CD14-positive monocyte (primary cell): ENCODE measurements at regions of chr2 and their contacts with region 1.

Region 1: DNA sequence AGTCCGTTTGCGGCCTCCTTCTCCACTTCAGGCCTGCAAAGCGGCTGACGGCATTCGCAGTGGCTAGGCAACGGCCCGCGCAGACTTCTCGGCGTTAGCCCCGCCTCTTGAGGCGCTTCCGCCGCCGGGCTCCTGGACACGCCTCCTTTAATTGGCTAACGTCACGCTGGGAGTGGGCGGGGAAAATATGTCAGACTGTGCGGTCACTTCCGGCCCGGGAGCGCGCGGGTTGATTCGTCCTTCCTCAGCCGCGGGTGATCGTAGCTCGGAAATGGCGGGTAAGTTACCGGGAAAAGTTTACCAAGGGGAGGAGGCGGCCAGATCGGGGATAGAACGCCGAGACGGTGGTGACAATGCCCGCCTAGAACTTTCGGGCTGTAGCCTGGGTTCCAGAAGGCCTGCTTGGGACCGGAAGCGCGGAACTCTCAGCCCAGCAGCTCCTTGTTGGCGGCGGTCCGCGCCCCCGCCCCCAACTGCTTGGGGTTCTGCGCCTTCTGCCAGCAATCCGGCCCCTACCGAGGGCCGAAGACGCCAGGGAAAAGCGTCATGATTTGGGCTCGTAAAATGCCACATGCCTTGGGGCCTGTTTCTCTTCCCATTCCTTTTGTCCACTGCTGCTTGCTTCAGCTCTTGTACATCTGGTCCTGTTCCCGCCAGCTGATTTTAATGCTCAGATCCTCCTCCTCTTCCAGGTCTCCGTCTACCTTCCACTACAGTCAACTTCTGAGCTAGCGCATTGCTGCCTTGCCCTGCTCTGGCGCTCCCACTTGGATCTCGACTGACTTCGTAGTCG is at the start of gene HAT1:
- DNase-seq: peak; percentile 96 to 97 (median 97)
- H3K4me3 ChIP-seq: peak within 1 kb of the TSS; percentile 73 to 88 (median 87)
- H3K4me3 Mint-ChIP-seq: peak within 1 kb of the TSS; percentile 93 to 98
- H3K27ac ChIP-seq: peak within 1 kb of the TSS; percentile 80 to 86
- H3K27ac Mint-ChIP-seq: peak within 1 kb of the TSS; percentile 92 to 99 (median 98)
- H3K4me1 ChIP-seq: peaks cover 18 to 33% of the 10 kb centered on the region in 2 donors
- H3K4me1 Mint-ChIP-seq: peaks cover 22% of the 10 kb centered on the region
- H3K27me3 ChIP-seq: no peaks in the 10 kb centered on the region
- H3K27me3 Mint-ChIP-seq: peaks cover 0 to 1% (median 0%) of the 10 kb centered on the region in 3 donors
- CTCF ChIP-seq: no peak
- polyA plus RNA-seq, gene HAT1: 16.9 to 63.3 (median 62.8) TPM

Region 2: GRCh38 chr2:171687287-171688128 is 234.9 kb before region 1 on chr2 and contains the start of gene DYNC1I2:
- intact Hi-C with region 1: loop called in 1 of 2 experiments (anchors 10 kb)
- DNase-seq: peak; percentile 68 to 85 (median 81)
- H3K4me3 ChIP-seq: peak within 1 kb of the TSS; percentile 63 to 88 (median 82)
- H3K4me3 Mint-ChIP-seq: peak within 1 kb of the TSS; percentile 91 to 97
- H3K27ac ChIP-seq: peak within 1 kb of the TSS; percentile 48 to 84
- H3K27ac Mint-ChIP-seq: peak within 1 kb of the TSS; percentile 86 to 96 (median 95)
- H3K4me1 ChIP-seq: peaks cover 10 to 16% of the 10 kb centered on the region in 2 donors
- H3K4me1 Mint-ChIP-seq: peaks cover 20% of the 10 kb centered on the region
- H3K27me3 ChIP-seq: peaks cover under 1 to 8% of the 10 kb centered on the region in 2 donors
- H3K27me3 Mint-ChIP-seq: peaks cover 2 to 9% (median 6%) of the 10 kb centered on the region in 3 donors
- CTCF ChIP-seq: no peak
- polyA plus RNA-seq, gene DYNC1I2: 30.8 to 39.1 (median 32.2) TPM

Region 3: DNA sequence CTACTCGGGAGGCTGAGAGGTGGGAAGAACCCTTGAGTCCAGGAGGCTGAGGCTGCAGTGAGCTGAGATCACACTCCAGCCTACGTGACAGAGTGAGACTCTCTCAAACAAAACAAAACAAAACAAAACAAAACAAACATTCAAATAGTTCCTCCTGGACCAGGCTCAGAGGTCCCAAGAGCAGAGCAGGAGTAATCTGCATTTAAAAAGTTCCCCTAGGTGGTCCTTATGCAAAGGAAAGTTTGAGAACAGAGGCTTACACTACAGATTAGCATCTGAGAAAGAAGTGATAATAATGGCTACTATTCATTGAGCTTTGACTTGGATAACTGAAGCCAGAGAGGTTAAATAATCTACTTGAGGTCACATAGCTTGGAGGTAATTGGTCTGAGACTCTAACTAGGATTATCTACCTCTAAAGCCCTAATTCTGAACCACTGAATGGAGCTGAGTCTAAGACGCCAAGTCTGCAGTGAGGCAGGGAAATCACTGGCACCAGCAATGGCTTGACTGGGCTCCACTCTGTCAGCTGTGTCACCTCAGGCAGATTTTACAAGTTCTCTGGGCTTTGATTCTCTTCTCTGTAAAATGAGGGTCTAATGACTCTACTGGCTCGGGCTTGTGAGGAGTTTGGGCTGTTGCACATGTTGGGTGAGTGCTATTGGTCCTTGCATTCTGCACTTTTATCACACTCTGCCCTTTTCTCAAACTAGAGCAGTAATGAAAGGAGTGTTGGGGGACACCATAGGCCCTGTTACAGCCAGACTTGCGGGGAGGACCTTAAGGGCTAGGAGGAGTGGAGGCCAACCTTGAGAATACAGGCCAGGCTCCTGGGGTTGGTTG is 209.5 kb after region 1 on chr2:
- intact Hi-C with region 1: no loop called
- DNase-seq: no peak
- H3K4me3 ChIP-seq: no peak overlapping the region
- H3K4me3 Mint-ChIP-seq: no peak overlapping the region
- H3K27ac ChIP-seq: no peak overlapping the region
- H3K27ac Mint-ChIP-seq: peak overlapping the region in 1 of 7 donors; percentile 24
- H3K4me1 ChIP-seq: no peaks in the 10 kb centered on the region
- H3K4me1 Mint-ChIP-seq: no peaks in the 10 kb centered on the region
- H3K27me3 ChIP-seq: no peaks in the 10 kb centered on the region
- H3K27me3 Mint-ChIP-seq: peaks cover 1 to 2% (median 2%) of the 10 kb centered on the region in 3 donors
- CTCF ChIP-seq: no peak